IMR-90 (cell line): ENCODE measurements at regions of chr20 and their contacts with region 1.

Region 1: DNA sequence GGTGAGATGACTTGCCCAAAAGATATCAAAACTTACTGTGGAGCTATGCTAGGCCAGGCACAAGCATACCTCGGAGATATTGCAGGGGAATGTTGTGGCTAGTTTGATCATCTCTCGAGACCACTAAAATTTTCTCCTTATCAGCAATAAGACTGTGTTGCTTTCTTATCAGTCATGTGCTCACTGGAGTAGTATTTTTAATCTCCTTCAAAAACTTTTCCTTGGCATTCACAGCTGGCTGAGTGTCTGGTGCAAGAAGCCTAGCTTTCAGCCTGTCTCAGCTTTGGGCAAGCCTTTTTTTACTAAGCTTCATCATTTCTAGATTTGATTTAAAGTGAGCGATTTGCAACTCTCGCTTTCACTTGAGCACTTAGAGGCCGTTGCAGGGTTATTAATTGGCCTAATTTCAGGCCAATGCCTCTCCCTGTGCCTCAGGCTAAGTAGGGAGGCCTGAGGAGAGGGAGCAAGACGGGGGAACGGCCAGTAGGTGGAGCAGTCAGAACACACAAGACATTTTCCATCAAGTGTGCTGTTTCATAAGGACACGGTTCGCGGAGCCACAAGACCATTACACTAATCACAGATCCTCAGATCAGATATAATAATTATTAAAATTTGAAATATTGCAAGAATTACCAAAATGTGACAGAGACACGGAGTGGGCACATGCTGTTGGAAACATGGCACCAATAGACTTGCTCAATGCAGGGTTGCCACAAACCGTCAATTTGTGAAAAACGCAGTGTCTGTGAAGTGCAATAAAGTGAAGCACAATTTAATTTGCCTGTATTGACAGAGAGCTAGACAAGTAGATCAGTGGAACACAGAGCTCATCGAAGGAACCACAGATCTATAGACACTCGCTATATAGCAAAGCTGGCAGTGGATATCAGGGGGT is 106.8 kb upstream of the SIRPG start:
- DNase-seq: peak; percentile 86
- ATAC-seq: peak; percentile 97
- H3K4me3 ChIP-seq: no peak overlapping the region
- H3K27ac ChIP-seq: no peak overlapping the region
- H3K4me1 ChIP-seq: peaks cover 2% of the 10 kb centered on the region
- H3K27me3 ChIP-seq: no peaks in the 10 kb centered on the region
- CTCF ChIP-seq: peak; percentile 86
- POLR2A ChIP-seq: no peak
- RAD21 ChIP-seq: peak; percentile 83

Region 2: GRCh38 chr20:1776681-1777475 is 12.5 kb after region 1 on chr20:
- CTCF ChIA-PET with region 1: interaction called, 20 read pairs
- POLR2A ChIA-PET with region 1: no interaction called
- dilution Hi-C with region 1: no loop called
- in situ Hi-C with region 1: no loop called
- intact Hi-C with region 1: no loop called
- DNase-seq: peak; percentile 87
- ATAC-seq: peak; percentile 97
- H3K4me3 ChIP-seq: peak overlapping the region; percentile 84
- H3K27ac ChIP-seq: peak overlapping the region; percentile 73
- H3K4me1 ChIP-seq: peaks cover 4% of the 10 kb centered on the region
- H3K27me3 ChIP-seq: peaks cover 14% of the 10 kb centered on the region
- CTCF ChIP-seq: peak; percentile 84
- POLR2A ChIP-seq: peak; percentile 65; the same call in 1 of the 2 replicates
- RAD21 ChIP-seq: peak; percentile 70

Region 3: GRCh38 chr20:1793821-1794220 is 29.4 kb after region 1 on chr20:
- CTCF ChIA-PET with region 1: no interaction called
- POLR2A ChIA-PET with region 1: no interaction called
- dilution Hi-C with region 1: no loop called
- in situ Hi-C with region 1: no loop called
- intact Hi-C with region 1: no loop called
- DNase-seq: no peak
- ATAC-seq: no peak
- H3K4me3 ChIP-seq: no peak overlapping the region
- H3K27ac ChIP-seq: no peak overlapping the region
- H3K4me1 ChIP-seq: no peaks in the 10 kb centered on the region
- H3K27me3 ChIP-seq: peaks cover 25% of the 10 kb centered on the region
- CTCF ChIP-seq: no peak
- POLR2A ChIP-seq: no peak
- RAD21 ChIP-seq: no peak

Region 4: GRCh38 chr20:1894951-1895673 is 130.7 kb after region 1 on chr20 and contains the start of gene SIRPA:
- CTCF ChIA-PET with region 1: interaction called, 4 read pairs
- POLR2A ChIA-PET with region 1: no interaction called
- dilution Hi-C with region 1: no loop called
- in situ Hi-C with region 1: no loop called
- intact Hi-C with region 1: loop called (anchors 5 kb)
- DNase-seq: peak; percentile 64
- ATAC-seq: peak; percentile 65
- H3K4me3 ChIP-seq: peak within 1 kb of the TSS; percentile 77
- H3K27ac ChIP-seq: peak within 1 kb of the TSS; percentile 99
- H3K4me1 ChIP-seq: peaks cover 22% of the 10 kb centered on the region
- H3K27me3 ChIP-seq: no peaks in the 10 kb centered on the region
- CTCF ChIP-seq: no peak
- POLR2A ChIP-seq: peak; percentile 60
- RAD21 ChIP-seq: no peak
- total RNA-seq, gene SIRPA: 9.7 and 9.9 TPM in 2 replicates

Region 5: DNA sequence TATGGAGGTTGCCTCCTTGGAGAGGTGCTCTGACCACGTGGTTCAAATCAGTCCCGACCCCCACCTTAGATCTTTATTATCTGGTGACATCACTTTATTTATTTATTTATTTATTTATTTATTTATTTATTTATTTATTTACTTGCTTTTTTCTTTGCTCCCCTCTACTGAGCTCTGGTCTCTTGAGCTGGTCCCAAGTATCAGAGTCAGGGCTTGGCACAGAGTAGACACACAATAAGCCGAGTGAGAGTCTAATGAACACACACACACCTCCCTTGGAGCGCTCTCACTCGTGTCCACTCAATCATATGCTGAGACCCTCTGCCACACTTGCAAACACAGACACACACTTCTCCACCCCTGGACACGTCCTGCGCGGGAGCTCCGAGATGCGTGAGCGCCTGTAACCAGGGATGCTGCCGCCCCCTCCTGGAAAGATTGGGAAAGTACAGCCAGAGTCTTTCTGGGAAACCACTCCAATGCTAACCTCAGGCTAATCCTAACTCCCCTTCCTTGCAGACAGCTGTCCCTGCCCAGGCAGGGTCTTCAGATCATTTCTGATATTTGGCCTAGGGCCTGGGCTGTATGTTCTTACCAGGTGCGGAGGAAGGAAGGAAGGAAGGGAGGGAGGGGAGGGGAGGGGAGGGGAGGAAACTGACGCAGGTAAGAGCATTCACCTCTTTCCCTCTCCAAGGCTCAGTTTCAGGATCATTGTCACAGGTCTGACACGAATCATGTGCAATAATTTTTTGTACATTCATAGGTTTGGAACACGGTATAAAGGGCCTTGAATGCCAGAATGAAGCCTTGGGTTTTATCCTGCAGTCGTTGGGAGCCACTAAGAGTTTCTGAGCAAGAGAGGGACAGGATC is 408.2 kb after region 1 on chr20:
- CTCF ChIA-PET with region 1: interaction called, 3 read pairs
- POLR2A ChIA-PET with region 1: no interaction called
- dilution Hi-C with region 1: no loop called
- in situ Hi-C with region 1: loop called (anchors 10 kb)
- intact Hi-C with region 1: loop called (anchors 1 kb)
- DNase-seq: peak; percentile 45
- ATAC-seq: peak; percentile 96
- H3K4me3 ChIP-seq: no peak overlapping the region
- H3K27ac ChIP-seq: no peak overlapping the region
- H3K4me1 ChIP-seq: no peaks in the 10 kb centered on the region
- H3K27me3 ChIP-seq: peaks cover 32% of the 10 kb centered on the region
- CTCF ChIP-seq: peak; percentile 94
- POLR2A ChIP-seq: 0 out of 2 replicates have a peak, but pooled peaks have one; percentile 27
- RAD21 ChIP-seq: peak; percentile 98

Region 6: GRCh38 chr20:2470423-2471193 is 706.2 kb after region 1 on chr20 and contains the start of gene SNRPB:
- CTCF ChIA-PET with region 1: no interaction called
- POLR2A ChIA-PET with region 1: no interaction called
- dilution Hi-C with region 1: no loop called
- in situ Hi-C with region 1: loop called (anchors 25 kb)
- intact Hi-C with region 1: no loop called
- DNase-seq: peak; percentile 99
- ATAC-seq: peak; percentile 91
- H3K4me3 ChIP-seq: peak within 1 kb of the TSS; percentile 76
- H3K27ac ChIP-seq: peak within 1 kb of the TSS; percentile 91
- H3K4me1 ChIP-seq: peaks cover 7% of the 10 kb centered on the region
- H3K27me3 ChIP-seq: no peaks in the 10 kb centered on the region
- CTCF ChIP-seq: no peak
- POLR2A ChIP-seq: peak; percentile 87
- RAD21 ChIP-seq: peak; percentile 6; the same call in 1 of the 2 replicates
- total RNA-seq, gene SNRPB: 103 and 109 TPM in 2 replicates